SK-N-SH (cell line): ENCODE measurements at regions of chr15 and their contacts with region 1.

Region 1: GRCh38 chr15:69475769-69476358 is 23.2 kb downstream of the RPLP1 start:
- DNase-seq: peak; percentile 85
- H3K4me3 ChIP-seq: peak overlapping the region in 1 of 2 experiments; percentile 30; a peak in 1 of 4 replicates
- H3K27ac ChIP-seq: no peak overlapping the region
- H3K4me1 ChIP-seq: peaks cover 0 to 8% of the 10 kb centered on the region in 2 experiments; a peak in 2 of 4 replicates
- H3K27me3 ChIP-seq: no peaks in the 10 kb centered on the region
- CTCF ChIP-seq: peak; percentile 86
- EP300 ChIP-seq: no peak
- RAD21 ChIP-seq: peak; percentile 94

Region 2: DNA sequence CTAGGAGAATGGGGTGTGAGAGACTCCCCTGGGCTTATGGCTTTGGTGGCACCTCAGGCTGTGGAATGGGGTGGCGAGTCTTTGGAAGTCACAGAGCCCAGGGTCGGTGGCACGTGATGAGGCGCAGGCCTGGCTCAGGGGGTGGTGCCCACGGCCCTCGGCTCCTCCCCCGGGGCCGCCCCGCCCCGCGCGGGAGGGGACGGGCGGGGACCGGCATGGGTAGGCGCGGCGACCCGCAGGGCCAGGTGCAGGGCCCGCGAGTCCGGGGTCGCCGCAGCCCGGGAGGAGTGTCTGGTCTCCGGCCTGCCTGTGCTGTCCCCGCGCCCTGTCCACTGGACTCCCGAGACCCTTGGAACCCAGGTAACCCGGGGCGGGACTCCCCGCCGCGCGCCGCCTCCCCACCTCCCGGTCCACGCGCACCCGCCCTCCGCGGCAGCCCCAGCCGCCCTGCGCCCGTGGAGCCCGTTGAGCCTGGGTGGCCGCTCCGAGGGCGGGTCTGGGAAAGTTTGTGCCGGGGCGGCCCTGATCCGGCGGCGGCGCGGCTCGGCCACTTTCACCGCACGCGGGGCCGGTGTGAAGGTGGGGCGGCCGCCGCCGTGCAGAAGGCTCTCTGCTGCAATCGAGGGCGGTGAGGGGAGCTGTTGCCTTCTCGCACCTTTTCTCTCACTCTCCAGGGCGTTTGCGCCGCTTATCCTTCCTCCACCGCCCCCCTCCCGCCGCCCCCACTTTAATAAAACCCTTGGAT is 177.0 kb before region 1 on chr15 and contains the start of gene PAQR5:
- CTCF ChIA-PET with region 1: no interaction called
- POLR2A ChIA-PET with region 1: no interaction called
- DNase-seq: peak; percentile 91
- H3K4me3 ChIP-seq: peak within 1 kb of the TSS; percentile 65 to 66
- H3K27ac ChIP-seq: no peak within 1 kb of the TSS
- H3K4me1 ChIP-seq: peaks cover 0 to 6% of the 10 kb centered on the region in 2 experiments; a peak in 1 of 4 replicates
- H3K27me3 ChIP-seq: no peaks in the 10 kb centered on the region
- CTCF ChIP-seq: no peak
- EP300 ChIP-seq: no peak
- RAD21 ChIP-seq: no peak
- polyA plus RNA-seq, gene PAQR5: 3.9 and 4.3 TPM in 2 replicates

Region 3: GRCh38 chr15:69323966-69324365 is 151.9 kb before region 1 on chr15:
- CTCF ChIA-PET with region 1: no interaction called
- POLR2A ChIA-PET with region 1: no interaction called
- DNase-seq: no peak
- H3K4me3 ChIP-seq: no peak overlapping the region
- H3K27ac ChIP-seq: no peak overlapping the region
- H3K4me1 ChIP-seq: peaks cover 0 to 17% of the 10 kb centered on the region in 2 experiments; a peak in 3 of 4 replicates
- H3K27me3 ChIP-seq: no peaks in the 10 kb centered on the region
- CTCF ChIP-seq: no peak
- EP300 ChIP-seq: no peak
- RAD21 ChIP-seq: no peak

Region 4: DNA sequence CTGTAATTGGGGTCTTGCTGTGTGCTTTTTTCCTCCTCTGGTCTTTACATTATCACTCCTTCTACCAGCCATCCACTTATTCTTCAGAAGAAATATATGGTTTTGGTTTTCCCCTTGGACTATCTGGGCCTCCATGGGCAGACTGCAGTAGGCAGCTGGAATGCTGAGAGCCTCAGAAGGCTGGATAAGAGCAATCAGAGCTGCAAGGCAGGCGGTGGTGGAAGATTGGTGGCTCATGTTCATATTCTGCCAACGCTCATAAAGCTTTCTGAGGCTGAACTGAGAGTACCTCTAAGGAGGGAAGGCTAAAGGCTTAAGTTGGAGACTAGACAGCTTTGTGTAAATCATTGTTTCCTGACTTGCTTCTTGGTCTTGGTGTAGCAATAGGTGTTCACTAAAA is 28.9 kb before region 1 on chr15:
- CTCF ChIA-PET with region 1: no interaction called
- POLR2A ChIA-PET with region 1: no interaction called
- DNase-seq: no peak
- H3K4me3 ChIP-seq: no peak overlapping the region
- H3K27ac ChIP-seq: no peak overlapping the region
- H3K4me1 ChIP-seq: peaks cover 2 to 4% of the 10 kb centered on the region in 2 experiments; a peak in 3 of 4 replicates
- H3K27me3 ChIP-seq: no peaks in the 10 kb centered on the region
- CTCF ChIP-seq: no peak
- EP300 ChIP-seq: no peak
- RAD21 ChIP-seq: no peak

Region 5: DNA sequence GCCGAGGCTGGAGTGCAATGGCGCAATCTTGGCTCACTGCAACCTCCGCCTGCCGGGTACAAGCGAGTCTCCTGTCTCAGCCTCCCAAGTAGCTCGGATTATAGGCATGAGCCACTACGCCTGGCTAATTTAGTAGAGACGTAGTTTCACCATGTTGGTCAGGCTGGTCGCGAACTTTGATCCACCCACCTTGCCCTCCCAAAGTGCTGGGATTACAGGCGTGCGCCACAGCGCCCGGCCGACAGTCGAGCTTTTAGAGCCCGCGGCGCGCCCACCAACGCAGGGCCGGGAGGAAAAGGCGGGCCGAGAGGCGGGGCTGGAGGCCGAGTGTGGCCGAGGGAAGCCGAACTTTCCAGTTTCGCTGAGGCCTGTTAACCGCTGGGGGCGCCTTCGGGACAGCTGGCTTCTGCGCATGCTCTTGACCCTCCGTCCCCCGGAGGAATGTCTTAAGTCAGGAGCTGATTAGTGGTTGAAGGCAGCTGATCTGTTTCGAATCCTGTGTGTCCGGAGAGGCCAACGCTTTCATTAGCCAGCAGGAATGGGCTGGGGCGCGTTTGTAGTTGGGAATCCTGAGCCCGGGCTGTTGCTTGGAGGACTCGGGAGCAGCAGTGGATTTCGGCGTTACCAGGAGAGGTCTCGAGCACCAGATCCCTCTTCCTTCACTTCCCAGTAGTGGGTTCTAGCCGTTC is 13.2 kb before region 1 on chr15:
- CTCF ChIA-PET with region 1: interaction called, 27 read pairs
- POLR2A ChIA-PET with region 1: no interaction called
- DNase-seq: peak; percentile 96
- H3K4me3 ChIP-seq: peak overlapping the region; percentile 46 to 65
- H3K27ac ChIP-seq: peak overlapping the region; percentile 92 to 93
- H3K4me1 ChIP-seq: peaks cover 8 to 10% of the 10 kb centered on the region in 2 experiments; a peak in 3 of 4 replicates
- H3K27me3 ChIP-seq: no peaks in the 10 kb centered on the region
- CTCF ChIP-seq: peak; percentile 82
- EP300 ChIP-seq: peak in 1 of 2 experiments; percentile 32; a peak in 1 of 4 replicates
- RAD21 ChIP-seq: no peak

Region 6: DNA sequence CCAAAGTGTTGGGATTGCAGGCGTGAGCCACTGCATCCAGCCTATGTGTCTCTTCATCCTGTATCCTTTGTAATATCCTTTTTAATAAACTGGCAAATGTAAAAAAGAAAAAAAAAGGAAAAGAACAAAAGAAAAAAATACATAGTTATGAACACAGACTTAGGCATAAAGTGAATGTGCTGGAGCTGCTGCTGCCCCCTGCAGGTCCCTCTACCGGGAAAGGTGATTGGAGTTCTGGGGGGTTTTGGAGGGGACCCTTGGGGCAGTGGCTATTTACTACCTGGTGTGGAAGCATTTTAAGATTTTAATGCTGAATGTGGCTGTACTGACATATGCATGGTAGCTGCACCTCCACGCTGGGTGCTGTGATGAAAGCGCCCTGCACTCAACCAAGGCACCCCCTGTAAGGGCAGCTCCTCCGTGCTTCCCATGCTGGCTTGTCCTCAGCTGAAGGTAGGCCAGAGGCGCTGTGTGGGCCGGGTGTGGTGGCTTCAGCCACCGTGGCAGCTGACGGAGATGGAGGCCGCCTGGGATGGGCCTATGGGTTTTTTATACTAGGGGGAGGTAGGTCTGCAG is 26.7 kb after region 1 on chr15:
- CTCF ChIA-PET with region 1: interaction called, 81 read pairs
- POLR2A ChIA-PET with region 1: no interaction called
- DNase-seq: no peak
- H3K4me3 ChIP-seq: no peak overlapping the region
- H3K27ac ChIP-seq: no peak overlapping the region
- H3K4me1 ChIP-seq: peaks cover 0 to 4% of the 10 kb centered on the region in 2 experiments; a peak in 1 of 4 replicates
- H3K27me3 ChIP-seq: no peaks in the 10 kb centered on the region
- CTCF ChIP-seq: peak; percentile 33
- EP300 ChIP-seq: no peak
- RAD21 ChIP-seq: no peak

Region 7: GRCh38 chr15:69543681-69544364 is 68.0 kb after region 1 on chr15:
- CTCF ChIA-PET with region 1: no interaction called
- POLR2A ChIA-PET with region 1: no interaction called
- DNase-seq: no peak
- H3K4me3 ChIP-seq: no peak overlapping the region
- H3K27ac ChIP-seq: no peak overlapping the region
- H3K4me1 ChIP-seq: peaks cover 0 to 14% of the 10 kb centered on the region in 2 experiments; a peak in 1 of 4 replicates
- H3K27me3 ChIP-seq: peaks cover 16% of the 10 kb centered on the region; the same call in 1 of the 2 replicates
- CTCF ChIP-seq: no peak
- EP300 ChIP-seq: no peak
- RAD21 ChIP-seq: no peak

Region 8: GRCh38 chr15:70466895-70467529 is 991.1 kb after region 1 on chr15:
- CTCF ChIA-PET with region 1: interaction called, 25 read pairs
- POLR2A ChIA-PET with region 1: no interaction called
- DNase-seq: peak; percentile 75
- H3K4me3 ChIP-seq: no peak overlapping the region; a peak in 1 of 4 replicates
- H3K27ac ChIP-seq: no peak overlapping the region; a peak in 1 of 4 replicates
- H3K4me1 ChIP-seq: peaks cover 0 to 37% of the 10 kb centered on the region in 2 experiments; a peak in 1 of 4 replicates
- H3K27me3 ChIP-seq: no peaks in the 10 kb centered on the region
- CTCF ChIP-seq: peak; percentile 76
- EP300 ChIP-seq: no peak
- RAD21 ChIP-seq: peak; percentile 77

Region 9: DNA sequence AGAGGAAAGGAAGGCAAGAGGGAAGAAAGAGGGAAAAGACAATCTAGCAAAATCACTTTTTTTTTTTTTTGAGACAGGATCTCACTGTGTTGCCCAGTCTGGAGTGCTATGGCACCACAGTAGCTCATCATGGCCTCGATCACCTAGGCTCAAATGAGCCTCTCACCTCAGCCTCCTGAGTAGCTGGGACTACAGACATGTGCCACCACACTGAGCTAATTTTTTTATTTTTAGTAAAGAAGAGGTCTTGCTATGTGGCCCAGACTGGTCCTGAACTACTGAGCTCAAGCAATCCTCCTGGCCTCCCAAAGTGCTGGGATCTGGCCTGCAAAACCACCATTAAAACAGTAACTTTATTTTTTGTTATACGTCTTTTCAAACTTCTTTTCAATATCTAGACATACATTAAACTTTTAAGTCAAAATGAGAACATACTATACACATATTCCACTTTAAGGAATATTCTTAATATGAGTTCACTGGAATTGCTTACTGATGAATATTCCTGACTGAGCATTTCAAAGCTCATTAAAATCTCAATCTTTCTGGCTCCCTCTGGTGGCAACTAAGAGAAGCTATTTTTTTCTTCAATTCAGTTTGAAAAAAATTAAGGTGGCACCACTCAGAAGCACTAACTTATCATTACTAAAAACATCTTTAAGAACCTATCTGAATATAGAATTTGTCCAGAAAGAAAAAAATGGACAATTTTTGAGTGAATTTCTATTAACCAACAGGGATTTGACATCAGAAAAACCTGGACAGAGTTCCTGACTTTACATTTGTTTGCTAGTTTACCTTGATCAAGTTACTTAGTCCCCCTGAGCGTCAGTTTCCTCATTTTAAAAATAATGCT is 1246.6 kb after region 1 on chr15:
- CTCF ChIA-PET with region 1: interaction called, 11 read pairs
- POLR2A ChIA-PET with region 1: no interaction called
- DNase-seq: peak; percentile 52
- H3K4me3 ChIP-seq: peak overlapping the region in 1 of 2 experiments; percentile 19; a peak in 1 of 4 replicates
- H3K27ac ChIP-seq: no peak overlapping the region
- H3K4me1 ChIP-seq: peaks cover 0 to 11% of the 10 kb centered on the region in 2 experiments; a peak in 2 of 4 replicates
- H3K27me3 ChIP-seq: no peaks in the 10 kb centered on the region
- CTCF ChIP-seq: peak; percentile 88
- EP300 ChIP-seq: no peak
- RAD21 ChIP-seq: peak; percentile 67